ENCODE measurements at regions of chr12 and their contacts with region 1.

Region 1: GRCh38 chr12:6927379-6928024 is at the start of gene ATN1:
- DNase-seq: peak; percentile 48
- H3K4me3 Mint-ChIP-seq: peak within 1 kb of the TSS; percentile 84
- H3K27ac Mint-ChIP-seq: peak within 1 kb of the TSS; percentile 91
- H3K4me1 Mint-ChIP-seq: peaks cover 73% of the 10 kb centered on the region
- H3K27me3 Mint-ChIP-seq: no peaks in the 10 kb centered on the region
- total RNA-seq, gene ATN1: 27.3 to 27.6 TPM

Region 2: GRCh38 chr12:6904280-6905278 is 22.9 kb before region 1 on chr12 and contains the start of gene LRRC23:
- CTCF ChIA-PET with region 1: interaction called, 31 read pairs
- POLR2A ChIA-PET with region 1: no interaction called
- DNase-seq: peak; percentile 99
- H3K4me3 Mint-ChIP-seq: no peak within 1 kb of the TSS
- H3K27ac Mint-ChIP-seq: no peak within 1 kb of the TSS
- H3K4me1 Mint-ChIP-seq: peaks cover 11% of the 10 kb centered on the region
- H3K27me3 Mint-ChIP-seq: no peaks in the 10 kb centered on the region
- total RNA-seq, gene LRRC23: 4.4 to 5.2 TPM

Region 3: DNA sequence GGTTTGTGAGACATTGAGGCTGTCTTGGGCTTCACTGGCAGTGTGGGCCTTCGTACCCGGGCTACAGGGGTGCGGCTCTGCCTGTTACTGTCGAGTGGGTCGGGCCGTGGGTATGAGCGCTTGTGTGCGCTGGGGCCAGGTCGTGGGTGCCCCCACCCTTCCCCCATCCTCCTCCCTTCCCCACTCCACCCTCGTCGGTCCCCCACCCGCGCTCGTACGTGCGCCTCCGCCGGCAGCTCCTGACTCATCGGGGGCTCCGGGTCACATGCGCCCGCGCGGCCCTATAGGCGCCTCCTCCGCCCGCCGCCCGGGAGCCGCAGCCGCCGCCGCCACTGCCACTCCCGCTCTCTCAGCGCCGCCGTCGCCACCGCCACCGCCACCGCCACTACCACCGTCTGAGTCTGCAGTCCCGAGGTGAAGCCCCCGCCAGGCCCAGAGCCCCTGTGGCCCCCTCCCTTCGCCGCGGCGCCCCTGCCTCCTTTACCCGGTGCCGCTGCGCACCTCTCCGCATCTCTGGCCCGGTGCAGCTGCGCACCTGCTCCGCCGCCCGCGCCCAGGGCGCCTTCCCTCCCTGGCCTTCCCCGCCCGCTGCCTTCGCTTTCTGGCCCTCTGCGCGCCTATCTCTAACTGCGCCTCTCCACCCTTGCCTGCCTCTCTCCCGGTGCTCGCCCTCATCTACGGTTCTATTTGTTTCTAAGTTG is 13.1 kb before region 1 on chr12 and contains the start of gene ENO2:
- CTCF ChIA-PET with region 1: interaction called, 39 read pairs
- POLR2A ChIA-PET with region 1: no interaction called
- DNase-seq: peak; percentile 78
- H3K4me3 Mint-ChIP-seq: peak within 1 kb of the TSS; percentile 84
- H3K27ac Mint-ChIP-seq: peak within 1 kb of the TSS; percentile 91
- H3K4me1 Mint-ChIP-seq: peaks cover 43% of the 10 kb centered on the region
- H3K27me3 Mint-ChIP-seq: no peaks in the 10 kb centered on the region
- total RNA-seq, gene ENO2: 156 to 160 TPM

Region 4: DNA sequence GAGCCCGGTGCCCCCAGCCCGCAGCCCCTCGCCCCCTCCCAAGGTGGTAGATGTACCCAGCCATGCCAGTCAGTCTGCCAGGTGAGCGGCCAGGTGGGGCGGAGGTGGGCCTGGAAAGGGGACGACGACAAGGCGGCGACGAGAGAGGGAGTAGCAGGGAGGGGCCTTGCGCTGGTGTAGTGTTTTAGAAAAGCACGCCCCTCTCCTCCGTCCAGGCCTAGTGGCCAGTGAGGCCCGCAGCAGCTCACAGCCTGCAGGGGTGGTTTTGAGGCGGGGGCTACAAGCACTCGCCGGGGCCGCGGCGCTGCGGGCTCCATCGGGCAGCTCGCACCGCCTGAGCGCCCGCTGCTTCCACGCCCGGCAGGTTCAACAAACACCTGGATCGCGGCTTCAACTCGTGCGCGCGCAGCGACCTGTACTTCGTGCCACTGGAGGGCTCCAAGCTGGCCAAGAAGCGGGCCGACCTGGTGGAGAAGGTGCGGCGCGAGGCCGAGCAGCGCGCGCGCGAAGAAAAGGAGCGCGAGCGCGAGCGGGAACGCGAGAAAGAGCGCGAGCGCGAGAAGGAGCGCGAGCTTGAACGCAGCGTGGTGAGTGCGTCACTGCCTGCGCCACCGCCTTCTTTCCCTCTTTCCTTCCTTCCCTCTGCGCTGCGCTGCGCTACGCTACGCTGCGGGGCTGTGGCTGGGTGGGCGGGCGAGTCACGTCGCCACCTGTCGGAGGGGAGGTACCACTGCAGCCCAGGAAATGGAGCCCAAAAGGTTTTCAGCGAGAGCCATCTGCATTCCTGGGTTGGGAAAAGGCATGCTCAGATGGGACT is 10.2 kb after region 1 on chr12:
- CTCF ChIA-PET with region 1: interaction called, 49 read pairs
- POLR2A ChIA-PET with region 1: no interaction called
- DNase-seq: peak; percentile 95
- H3K4me3 Mint-ChIP-seq: peak overlapping the region; percentile 81
- H3K27ac Mint-ChIP-seq: peak overlapping the region; percentile 97
- H3K4me1 Mint-ChIP-seq: peaks cover 59% of the 10 kb centered on the region
- H3K27me3 Mint-ChIP-seq: no peaks in the 10 kb centered on the region

Region 5: DNA sequence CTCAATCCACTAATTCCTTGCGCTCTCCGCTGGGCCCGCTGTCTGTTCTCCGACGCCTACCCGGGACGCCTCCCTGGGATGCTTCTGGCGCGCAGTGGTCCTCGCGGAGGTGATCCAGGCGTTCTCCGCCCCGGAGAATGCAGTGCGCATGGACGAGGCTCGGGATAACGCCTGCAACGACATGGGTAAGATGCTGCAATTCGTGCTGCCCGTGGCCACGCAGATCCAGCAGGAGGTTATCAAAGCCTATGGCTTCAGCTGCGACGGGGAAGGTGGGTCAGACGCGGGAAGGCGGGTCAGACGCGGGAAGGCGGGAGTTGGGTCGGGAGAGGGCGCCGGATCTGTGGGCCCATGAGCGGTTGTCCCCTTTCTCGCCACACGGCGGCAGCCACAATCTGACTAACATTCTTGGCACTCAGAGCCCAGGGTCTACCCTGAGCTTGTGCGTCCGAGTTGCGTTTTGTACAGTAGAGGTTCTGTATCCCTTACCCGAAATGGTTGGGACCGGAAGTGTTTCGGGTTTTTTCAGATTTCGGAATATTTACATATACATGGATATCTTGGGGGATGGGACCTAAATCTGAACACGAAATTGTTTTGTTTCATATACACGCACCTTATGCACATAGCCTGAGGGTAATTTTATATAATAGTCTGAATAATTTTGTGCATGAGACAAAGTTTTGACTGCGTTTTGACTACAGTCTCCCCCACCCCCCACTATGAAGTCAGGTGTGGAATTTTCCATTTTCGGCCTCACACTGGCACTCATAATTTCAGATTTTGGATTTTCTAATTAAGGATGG is 17.1 kb after region 1 on chr12:
- CTCF ChIA-PET with region 1: interaction called, 49 read pairs
- POLR2A ChIA-PET with region 1: interaction called, 6 read pairs
- DNase-seq: peak; percentile 92
- H3K4me3 Mint-ChIP-seq: peak overlapping the region; percentile 97
- H3K27ac Mint-ChIP-seq: peak overlapping the region; percentile 96
- H3K4me1 Mint-ChIP-seq: peaks cover 68% of the 10 kb centered on the region
- H3K27me3 Mint-ChIP-seq: no peaks in the 10 kb centered on the region

Region 6: DNA sequence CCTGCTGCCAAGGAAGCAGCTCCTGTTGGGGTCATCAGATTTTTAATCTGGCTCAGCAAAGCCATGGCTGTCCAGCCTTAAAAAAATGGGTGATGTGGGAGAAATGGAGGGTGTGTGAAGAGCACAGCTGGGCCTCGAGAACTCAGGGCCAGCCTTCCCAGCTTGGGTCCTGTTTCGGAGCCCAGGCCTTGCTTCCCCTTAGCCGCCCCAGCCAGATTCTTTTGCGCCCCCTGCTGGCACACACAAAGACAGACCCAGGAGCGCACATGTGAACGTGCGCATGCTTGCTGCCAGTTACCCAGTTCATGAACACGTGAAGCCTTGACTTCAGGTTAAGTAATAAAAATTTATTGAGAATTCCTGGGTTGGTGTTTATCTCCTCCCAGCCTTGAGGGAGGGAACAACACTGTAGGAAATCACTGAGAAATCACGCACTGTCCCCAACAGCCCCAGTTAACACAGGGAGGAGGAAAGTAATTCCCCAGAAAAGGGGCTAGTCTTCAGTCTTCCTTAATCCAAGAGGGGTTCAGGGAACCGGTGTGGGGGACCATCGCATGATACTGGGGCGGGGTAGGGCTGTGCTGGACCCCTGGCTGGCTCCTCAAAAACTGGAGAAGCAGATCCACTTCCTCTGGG is 37.6 kb after region 1 on chr12:
- CTCF ChIA-PET with region 1: interaction called, 16 read pairs
- POLR2A ChIA-PET with region 1: no interaction called
- DNase-seq: peak; percentile 91
- H3K4me3 Mint-ChIP-seq: no peak overlapping the region
- H3K27ac Mint-ChIP-seq: peak overlapping the region; percentile 85
- H3K4me1 Mint-ChIP-seq: peaks cover 68% of the 10 kb centered on the region
- H3K27me3 Mint-ChIP-seq: no peaks in the 10 kb centered on the region

Region 7: GRCh38 chr12:7018350-7019042 is 91.0 kb after region 1 on chr12 and contains the start of gene LPCAT3:
- CTCF ChIA-PET with region 1: no interaction called
- POLR2A ChIA-PET with region 1: no interaction called
- DNase-seq: peak; percentile 98
- H3K4me3 Mint-ChIP-seq: peak within 1 kb of the TSS; percentile 88
- H3K27ac Mint-ChIP-seq: peak within 1 kb of the TSS; percentile 89
- H3K4me1 Mint-ChIP-seq: peaks cover 31% of the 10 kb centered on the region
- H3K27me3 Mint-ChIP-seq: no peaks in the 10 kb centered on the region
- total RNA-seq, gene LPCAT3: 36.8 to 45.4 TPM

Region 8: DNA sequence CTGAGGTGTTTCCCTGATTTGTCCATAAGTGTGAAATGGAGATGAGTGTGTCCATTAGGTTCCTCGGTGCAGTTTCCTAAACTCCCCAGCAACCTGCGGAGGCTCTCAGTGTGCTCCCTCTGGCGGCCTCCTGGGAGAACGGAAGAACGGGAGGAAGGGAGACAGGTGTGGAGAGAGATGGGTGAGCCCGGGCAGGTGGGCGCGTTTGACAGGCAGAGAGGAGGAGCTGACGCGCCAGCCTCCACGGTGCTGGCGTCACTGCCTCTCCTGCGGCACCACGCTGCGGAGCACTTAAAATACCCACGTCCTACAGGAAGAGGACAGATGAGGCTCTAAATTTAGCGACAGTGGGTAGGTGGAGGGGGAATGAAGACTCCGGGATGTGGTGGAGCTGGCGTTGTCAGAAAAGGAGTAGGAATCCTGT is 235.2 kb after region 1 on chr12:
- CTCF ChIA-PET with region 1: no interaction called
- POLR2A ChIA-PET with region 1: no interaction called
- DNase-seq: peak; percentile 19
- H3K4me3 Mint-ChIP-seq: no peak overlapping the region
- H3K27ac Mint-ChIP-seq: no peak overlapping the region
- H3K4me1 Mint-ChIP-seq: peaks cover 4% of the 10 kb centered on the region
- H3K27me3 Mint-ChIP-seq: peaks cover 16% of the 10 kb centered on the region

Region 9: GRCh38 chr12:7479771-7480170 is 552.3 kb after region 1 on chr12:
- CTCF ChIA-PET with region 1: no interaction called
- POLR2A ChIA-PET with region 1: no interaction called
- DNase-seq: no peak
- H3K4me3 Mint-ChIP-seq: no peak overlapping the region
- H3K27ac Mint-ChIP-seq: no peak overlapping the region
- H3K4me1 Mint-ChIP-seq: no peaks in the 10 kb centered on the region
- H3K27me3 Mint-ChIP-seq: peaks cover 9% of the 10 kb centered on the region